Calu3 (cell line): ENCODE measurements at regions of chr2 and their contacts with region 1.

Region 1: DNA sequence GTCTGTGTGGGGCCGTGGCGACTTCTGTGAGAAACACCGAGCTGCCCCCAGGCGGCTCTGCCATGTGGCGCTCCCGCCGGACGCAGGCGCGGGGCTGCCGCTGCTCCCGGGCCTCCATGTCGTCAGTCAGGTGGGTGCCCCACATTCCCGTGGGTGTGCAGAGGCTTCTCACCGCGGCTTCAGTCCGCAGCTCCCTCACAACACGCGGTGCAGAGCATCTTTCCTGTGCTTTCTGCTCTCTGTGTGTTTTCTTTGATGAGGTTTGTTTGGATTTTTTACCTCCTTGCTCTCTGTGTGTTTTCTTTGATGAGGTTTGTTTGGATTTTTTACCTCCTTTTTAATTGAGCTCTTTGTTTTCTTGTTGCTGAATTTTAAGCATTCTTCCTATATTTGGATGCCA is 13.0 kb downstream of the AQP12A start:
- DNase-seq: no peak
- H3K4me3 Mint-ChIP-seq: no peak overlapping the region
- H3K27ac Mint-ChIP-seq: no peak overlapping the region
- H3K4me1 Mint-ChIP-seq: no peaks in the 10 kb centered on the region
- H3K27me3 Mint-ChIP-seq: peaks cover 81% of the 10 kb centered on the region
- CTCF ChIP-seq: no peak

Region 2: DNA sequence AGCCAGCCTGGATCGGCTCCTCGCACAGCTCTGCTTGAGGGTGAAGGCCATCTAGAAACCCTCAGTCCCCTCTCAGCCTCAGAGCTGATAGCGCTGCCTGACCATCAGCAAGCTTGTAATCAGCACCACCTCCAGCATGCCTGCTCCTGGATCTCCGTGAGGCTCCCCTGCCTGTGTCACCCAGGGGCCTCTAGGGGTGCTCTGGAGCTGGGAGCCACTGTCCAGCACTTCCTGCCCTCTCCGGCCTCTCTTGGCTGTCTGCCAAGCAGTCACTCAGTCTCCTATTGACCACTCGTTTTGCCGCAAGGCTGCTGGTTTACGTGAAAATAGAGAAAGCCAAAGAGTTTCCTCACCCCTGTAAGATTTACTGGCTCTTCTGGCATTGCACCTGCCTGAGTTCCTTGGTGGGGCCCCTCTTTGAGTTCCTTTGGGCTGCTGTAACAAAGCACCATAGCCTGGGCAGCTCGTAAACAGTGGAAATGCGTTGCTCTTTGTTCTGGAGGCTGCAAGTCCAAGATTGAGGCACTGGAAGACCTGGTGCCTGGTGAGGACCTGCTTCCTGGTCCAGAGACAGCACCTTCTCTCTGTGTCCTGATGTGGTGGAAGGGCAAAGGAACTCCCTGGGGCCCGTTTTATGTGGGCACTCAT is 100.2 kb before region 1 on chr2:
- CTCF ChIA-PET with region 1: no interaction called
- intact Hi-C with region 1: loop called (anchors 10 kb)
- DNase-seq: peak; percentile 94
- H3K4me3 Mint-ChIP-seq: peak overlapping the region; percentile 70
- H3K27ac Mint-ChIP-seq: peak overlapping the region; percentile 75
- H3K4me1 Mint-ChIP-seq: peaks cover 45% of the 10 kb centered on the region
- H3K27me3 Mint-ChIP-seq: no peaks in the 10 kb centered on the region
- CTCF ChIP-seq: peak; percentile 80